ENCODE measurements at regions of chr9 and their contacts with region 1.

Region 1: DNA sequence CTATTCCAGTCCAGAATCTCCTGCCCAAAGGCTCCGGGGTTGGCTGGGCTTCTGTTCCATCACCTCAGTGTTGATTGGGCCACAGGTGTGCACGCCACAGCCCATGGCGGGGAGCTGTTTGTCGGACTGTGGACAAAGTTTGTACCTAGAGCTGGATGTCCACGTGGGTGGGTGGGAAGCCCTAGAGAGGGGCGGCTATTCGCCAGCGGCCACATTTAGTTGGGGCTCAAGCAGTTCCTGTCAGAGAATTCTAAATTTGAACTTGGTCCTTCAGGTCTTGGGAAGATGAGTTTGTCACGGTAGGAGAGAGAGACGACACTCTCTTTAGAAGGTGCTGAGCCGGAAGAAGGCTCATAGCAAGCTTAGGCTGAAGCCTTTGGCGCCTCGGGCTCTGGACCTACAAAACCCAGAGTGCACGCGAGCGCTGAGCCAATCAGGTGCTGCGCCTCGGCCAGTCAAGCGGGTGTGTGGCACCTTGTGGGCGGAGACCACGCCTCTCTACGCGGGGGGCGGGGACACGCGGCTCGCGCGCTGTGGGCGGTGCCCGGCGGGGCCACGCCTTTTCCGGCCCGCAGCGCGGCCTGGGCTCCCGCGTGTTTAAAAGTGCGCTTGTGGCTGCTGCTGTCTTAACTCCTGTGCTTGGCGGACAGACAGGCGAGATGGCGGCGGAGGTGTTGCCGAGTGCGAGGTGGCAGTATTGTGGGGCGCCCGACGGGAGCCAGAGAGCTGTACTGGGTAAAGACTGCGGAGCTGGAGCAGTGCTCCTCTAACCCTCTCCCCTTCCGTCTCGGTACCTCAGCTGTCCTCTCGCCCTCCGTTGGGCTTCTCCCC is at the start of gene POLR1E:
- DNase-seq: peak; percentile 98
- ATAC-seq: peak; percentile 96
- H3K4me3 Mint-ChIP-seq: peak within 1 kb of the TSS; percentile 99
- H3K27ac Mint-ChIP-seq: peak within 1 kb of the TSS; percentile 95
- H3K4me1 Mint-ChIP-seq: peaks cover 37% of the 10 kb centered on the region
- H3K27me3 Mint-ChIP-seq: peaks cover 6% of the 10 kb centered on the region
- CTCF ChIP-seq: no peak
- total RNA-seq, gene POLR1E: 66.9 to 70.5 TPM

Region 2: DNA sequence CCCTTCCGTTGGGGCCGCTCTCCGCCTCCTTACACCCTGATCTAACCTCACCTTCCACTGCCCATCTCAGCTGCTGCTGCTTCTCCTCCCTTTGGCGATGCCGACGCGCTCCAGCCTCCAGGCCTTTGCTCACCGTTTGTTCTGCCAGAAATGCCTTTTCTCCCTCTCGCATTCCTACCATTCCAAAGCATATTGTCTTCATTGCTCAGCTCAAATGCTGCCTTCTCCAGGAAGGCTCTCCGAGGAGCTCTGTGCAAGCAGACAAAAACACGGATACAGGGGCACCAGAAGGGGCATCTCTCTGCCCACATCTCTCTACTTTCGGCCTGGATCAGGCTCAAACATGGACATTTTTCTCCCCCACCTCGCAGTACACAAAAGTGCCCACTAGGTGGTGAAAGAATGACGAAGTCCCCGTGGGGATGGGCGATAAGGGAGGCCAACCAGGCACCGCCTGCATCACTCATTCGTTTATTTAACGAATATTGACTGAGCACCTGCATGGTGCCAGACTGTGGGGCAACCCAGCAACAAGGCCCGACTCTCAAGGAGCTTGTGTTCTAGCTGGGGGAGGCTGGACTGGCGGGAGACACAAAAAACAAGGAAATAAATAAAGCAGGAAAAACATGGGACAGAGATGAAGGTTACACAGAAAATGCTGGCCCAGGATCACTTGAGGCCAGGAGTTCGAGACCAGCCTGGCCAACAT is 70.4 kb before region 1 on chr9:
- CTCF ChIA-PET with region 1: interaction called, 12 read pairs
- POLR2A ChIA-PET with region 1: no interaction called
- intact Hi-C with region 1: no loop called
- DNase-seq: peak; percentile 88
- ATAC-seq: peak; percentile 90
- H3K4me3 Mint-ChIP-seq: no peak overlapping the region
- H3K27ac Mint-ChIP-seq: no peak overlapping the region
- H3K4me1 Mint-ChIP-seq: peaks cover 14% of the 10 kb centered on the region
- H3K27me3 Mint-ChIP-seq: no peaks in the 10 kb centered on the region
- CTCF ChIP-seq: peak; percentile 82

Region 3: DNA sequence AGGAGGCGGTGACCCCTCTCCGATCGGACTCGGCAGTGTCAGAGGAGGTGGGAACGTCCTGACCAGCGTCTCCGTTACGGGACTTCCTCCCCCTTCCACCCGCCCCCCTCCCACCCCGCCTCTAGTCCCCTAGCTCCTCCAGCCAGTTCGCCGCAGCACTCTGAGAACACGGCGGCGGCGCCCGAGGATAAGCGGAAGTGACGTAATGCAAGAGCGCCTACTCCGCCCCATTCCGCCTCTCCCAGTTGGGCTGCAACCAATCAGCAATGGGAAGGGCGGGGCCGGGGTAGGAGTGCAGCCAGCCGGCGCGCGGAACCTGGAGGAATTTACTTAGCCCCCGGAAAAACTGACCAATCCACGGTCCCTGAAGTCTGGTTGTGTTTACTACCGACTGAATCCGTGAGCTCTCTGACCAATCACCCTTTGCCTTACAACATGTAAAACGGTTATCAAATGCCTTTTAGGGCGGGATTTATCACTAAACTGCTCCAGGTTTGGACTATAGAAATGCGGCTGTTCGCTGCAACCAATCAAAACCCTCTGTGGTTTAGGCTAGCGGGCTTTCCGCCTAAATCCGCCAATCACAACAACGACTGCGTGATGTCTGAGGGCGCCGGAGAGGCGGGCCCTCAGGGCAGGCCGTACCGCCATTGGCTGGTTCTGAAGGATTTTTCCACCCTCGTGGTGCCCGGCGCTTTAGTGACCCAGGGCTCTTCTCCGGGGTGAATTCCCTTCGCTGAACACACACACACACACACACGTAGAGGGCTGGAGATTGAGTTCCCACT is 20.2 kb before region 1 on chr9 and contains the start of gene ZBTB5:
- CTCF ChIA-PET with region 1: interaction called, 6 read pairs
- POLR2A ChIA-PET with region 1: interaction called, 42 read pairs
- intact Hi-C with region 1: loop called (anchors 2 kb)
- DNase-seq: peak; percentile 100
- ATAC-seq: peak; percentile 79
- H3K4me3 Mint-ChIP-seq: peak within 1 kb of the TSS; percentile 97
- H3K27ac Mint-ChIP-seq: peak within 1 kb of the TSS; percentile 98
- H3K4me1 Mint-ChIP-seq: peaks cover 31% of the 10 kb centered on the region
- H3K27me3 Mint-ChIP-seq: no peaks in the 10 kb centered on the region
- CTCF ChIP-seq: no peak
- total RNA-seq, gene ZBTB5: 8.6 to 8.8 TPM

Region 4: GRCh38 chr9:37496020-37496419 is 10.4 kb after region 1 on chr9:
- CTCF ChIA-PET with region 1: no interaction called
- POLR2A ChIA-PET with region 1: interaction called, 33 read pairs
- intact Hi-C with region 1: no loop called
- DNase-seq: no peak
- ATAC-seq: no peak
- H3K4me3 Mint-ChIP-seq: no peak overlapping the region
- H3K27ac Mint-ChIP-seq: peak overlapping the region; percentile 52
- H3K4me1 Mint-ChIP-seq: peaks cover 5% of the 10 kb centered on the region
- H3K27me3 Mint-ChIP-seq: no peaks in the 10 kb centered on the region
- CTCF ChIP-seq: no peak

Region 5: GRCh38 chr9:37592108-37592951 is 106.7 kb after region 1 on chr9 and contains the start of gene TOMM5:
- CTCF ChIA-PET with region 1: interaction called, 5 read pairs
- POLR2A ChIA-PET with region 1: interaction called, 16 read pairs
- intact Hi-C with region 1: no loop called
- DNase-seq: peak; percentile 94
- ATAC-seq: peak; percentile 94
- H3K4me3 Mint-ChIP-seq: peak within 1 kb of the TSS; percentile 100
- H3K27ac Mint-ChIP-seq: peak within 1 kb of the TSS; percentile 99
- H3K4me1 Mint-ChIP-seq: peaks cover 34% of the 10 kb centered on the region
- H3K27me3 Mint-ChIP-seq: peaks cover 6% of the 10 kb centered on the region
- CTCF ChIP-seq: no peak
- total RNA-seq, gene TOMM5: 156 to 168 TPM